ENCODE measurements at regions of chr4 and their contacts with region 1.

Region 1: DNA sequence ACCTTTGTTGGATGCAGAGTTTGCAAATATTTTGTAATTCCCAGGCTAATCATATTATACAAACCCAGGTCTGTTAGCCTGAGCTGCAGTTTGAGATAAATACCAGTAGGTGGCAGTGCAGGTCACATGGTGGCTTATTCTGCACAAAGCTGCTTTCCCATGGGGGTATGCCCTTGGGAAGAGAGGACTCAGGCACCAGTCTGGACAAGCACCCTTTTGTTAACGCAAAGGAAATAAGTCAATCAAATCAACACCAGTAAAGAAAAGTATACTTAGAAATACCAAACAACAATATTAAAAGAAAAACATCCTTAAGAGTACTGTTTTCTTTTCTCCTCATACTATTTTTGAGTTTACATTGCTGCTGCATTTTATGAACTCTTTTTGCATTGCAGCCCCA is 389.0 kb upstream of the ZFP42 start:
- DNase-seq: peak; percentile 54
- ATAC-seq: peak; percentile 87
- H3K4me3 ChIP-seq: no peak overlapping the region
- H3K27ac ChIP-seq: no peak overlapping the region
- H3K4me1 ChIP-seq: peaks cover 11 to 28% of the 10 kb centered on the region in 2 experiments
- H3K27me3 ChIP-seq: no peaks in the 10 kb centered on the region
- CTCF ChIP-seq: peak; percentile 74 to 95 (median 84)
- POLR2A ChIP-seq: no peak
- RAD21 ChIP-seq: peak; percentile 90

Region 2: GRCh38 chr4:187993827-187994226 is 387.2 kb after region 1 on chr4:
- CTCF ChIA-PET with region 1: interaction called, 3 read pairs
- POLR2A ChIA-PET with region 1: no interaction called
- RAD21 ChIA-PET with region 1: no interaction called
- intact Hi-C with region 1: loop called (anchors 5 kb)
- DNase-seq: peak; percentile 34
- ATAC-seq: peak; percentile 65; the same call in 1 of the 2 replicates
- H3K4me3 ChIP-seq: no peak overlapping the region
- H3K27ac ChIP-seq: no peak overlapping the region
- H3K4me1 ChIP-seq: peaks cover 2 to 13% of the 10 kb centered on the region in 2 experiments; a peak in 3 of 4 replicates
- H3K27me3 ChIP-seq: no peaks in the 10 kb centered on the region
- CTCF ChIP-seq: peak; percentile 57 to 72 (median 66); a peak in 5 of 6 replicates
- POLR2A ChIP-seq: no peak
- RAD21 ChIP-seq: peak; percentile 74

Region 3: DNA sequence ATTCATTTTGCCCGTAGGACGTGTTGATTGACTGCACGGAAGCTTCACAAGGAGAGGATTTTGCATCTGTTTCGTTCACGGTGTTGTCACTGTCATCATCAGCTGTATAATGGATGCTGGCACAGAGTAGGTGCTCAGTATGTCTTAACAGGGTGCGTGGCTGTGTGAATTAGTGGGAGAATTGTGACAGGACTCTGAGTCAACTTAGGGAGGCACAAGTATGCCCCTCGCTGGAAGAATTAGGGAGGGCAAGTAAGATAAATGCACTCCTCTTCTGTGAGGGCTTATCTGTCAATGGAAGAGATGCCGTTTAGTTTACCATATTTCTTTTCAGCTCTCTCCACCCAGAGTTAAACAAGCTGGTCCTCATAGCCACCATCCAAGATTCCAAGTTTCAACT is 639.9 kb after region 1 on chr4:
- CTCF ChIA-PET with region 1: no interaction called
- POLR2A ChIA-PET with region 1: no interaction called
- RAD21 ChIA-PET with region 1: no interaction called
- intact Hi-C with region 1: loop called (anchors 5 kb)
- DNase-seq: peak; percentile 7
- ATAC-seq: peak; percentile 75
- H3K4me3 ChIP-seq: no peak overlapping the region
- H3K27ac ChIP-seq: no peak overlapping the region
- H3K4me1 ChIP-seq: no peaks in the 10 kb centered on the region
- H3K27me3 ChIP-seq: no peaks in the 10 kb centered on the region
- CTCF ChIP-seq: peak in 2 of 3 experiments; percentile 26 to 46; a peak in 3 of 6 replicates
- POLR2A ChIP-seq: no peak
- RAD21 ChIP-seq: peak; percentile 71

Region 4: GRCh38 chr4:188455062-188455752 is 848.6 kb after region 1 on chr4:
- CTCF ChIA-PET with region 1: no interaction called
- POLR2A ChIA-PET with region 1: no interaction called
- RAD21 ChIA-PET with region 1: no interaction called
- intact Hi-C with region 1: loop called (anchors 10 kb)
- DNase-seq: no peak
- ATAC-seq: no peak
- H3K4me3 ChIP-seq: no peak overlapping the region
- H3K27ac ChIP-seq: no peak overlapping the region
- H3K4me1 ChIP-seq: peaks cover 0 to 10% of the 10 kb centered on the region in 2 experiments; a peak in 2 of 4 replicates
- H3K27me3 ChIP-seq: no peaks in the 10 kb centered on the region
- CTCF ChIP-seq: no peak
- POLR2A ChIP-seq: no peak
- RAD21 ChIP-seq: no peak

Measured in HCT116 (cell line).